Mucosa of descending colon (tissue), 3 donors: ENCODE measurements at regions of chr16 and their contacts with region 1.

Region 1: DNA sequence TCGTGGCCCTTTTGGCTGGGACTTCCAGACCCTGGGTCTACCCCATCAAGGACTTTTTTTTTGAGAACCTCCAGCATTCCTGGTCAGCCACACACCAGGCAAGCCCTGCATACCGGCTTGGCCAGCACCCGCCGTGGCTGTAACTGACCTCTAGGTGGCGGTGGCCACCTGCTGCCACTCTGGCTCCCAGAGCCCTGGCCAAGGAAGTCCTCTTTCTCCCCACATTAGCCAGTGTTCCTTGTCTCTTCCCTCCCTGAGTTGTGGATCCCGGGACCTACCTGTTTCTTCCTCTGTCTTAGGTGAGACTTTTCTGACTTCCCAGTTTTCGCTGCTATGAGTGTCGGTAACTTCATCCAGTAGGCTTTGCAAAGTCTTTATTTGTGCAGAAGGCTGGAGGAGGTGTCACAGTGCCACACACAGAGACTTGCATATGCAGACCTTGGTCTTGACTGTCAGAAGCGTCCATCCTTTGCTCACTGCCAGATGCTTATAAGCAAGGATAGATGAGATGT is 348.3 kb downstream of the CPPED1 start:
- DNase-seq: peak; percentile 61 to 75 (median 73)
- ATAC-seq: peak; percentile 88
- H3K4me3 ChIP-seq: no peak overlapping the region
- H3K4me1 ChIP-seq: no peaks in the 10 kb centered on the region
- CTCF ChIP-seq: peak; percentile 71

Region 2: DNA sequence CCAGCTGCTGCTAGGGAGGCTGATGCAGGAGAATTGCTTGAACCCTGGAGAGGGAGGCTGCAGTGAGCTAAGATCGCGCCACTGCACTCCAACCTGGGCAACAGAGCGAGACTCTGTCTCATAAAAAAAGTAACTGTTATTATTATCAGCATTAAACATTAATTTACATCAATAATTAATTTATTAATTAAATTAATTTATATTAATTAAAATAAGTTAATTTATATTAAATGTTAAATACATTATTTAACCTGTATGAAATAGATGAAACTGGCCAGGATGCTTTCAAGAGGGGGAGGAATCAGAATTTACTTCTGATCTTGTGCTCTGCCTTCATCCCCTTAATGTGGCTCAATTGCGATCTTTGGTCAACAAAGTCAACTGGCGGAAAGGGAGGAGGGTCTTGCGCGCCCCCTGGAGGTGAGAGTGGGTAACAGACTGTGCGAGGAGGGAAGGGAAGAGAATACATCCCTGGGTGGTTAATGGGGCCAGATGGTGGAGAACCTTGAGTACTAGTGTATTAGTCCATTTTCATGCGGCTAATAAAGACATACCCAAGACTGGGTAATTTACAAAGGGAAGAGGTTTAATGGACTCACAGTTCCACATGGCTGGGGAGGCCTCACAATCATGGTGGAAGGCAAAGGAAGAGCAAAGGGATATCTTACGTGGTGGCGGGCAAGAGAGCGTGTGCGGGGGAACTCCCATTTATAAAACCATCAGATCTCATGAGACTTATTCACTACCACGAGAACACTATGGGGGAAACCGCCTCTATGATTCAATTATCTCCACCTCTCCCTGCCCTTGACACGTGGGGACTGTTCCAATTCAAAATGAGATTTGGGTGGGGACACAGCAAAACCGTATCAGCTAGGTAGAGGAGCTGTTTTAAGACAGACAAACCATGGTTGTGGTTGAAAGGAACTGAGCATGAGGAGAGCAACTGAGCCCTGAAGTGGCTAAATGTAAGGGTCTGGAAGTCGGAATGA is 364.1 kb after region 1 on chr16:
- intact Hi-C with region 1: loop called (anchors 10 kb)
- DNase-seq: peak; percentile 70 to 85 (median 73)
- ATAC-seq: peak; percentile 88
- H3K4me3 ChIP-seq: no peak overlapping the region
- H3K4me1 ChIP-seq: no peaks in the 10 kb centered on the region
- CTCF ChIP-seq: peak; percentile 76

Region 3: DNA sequence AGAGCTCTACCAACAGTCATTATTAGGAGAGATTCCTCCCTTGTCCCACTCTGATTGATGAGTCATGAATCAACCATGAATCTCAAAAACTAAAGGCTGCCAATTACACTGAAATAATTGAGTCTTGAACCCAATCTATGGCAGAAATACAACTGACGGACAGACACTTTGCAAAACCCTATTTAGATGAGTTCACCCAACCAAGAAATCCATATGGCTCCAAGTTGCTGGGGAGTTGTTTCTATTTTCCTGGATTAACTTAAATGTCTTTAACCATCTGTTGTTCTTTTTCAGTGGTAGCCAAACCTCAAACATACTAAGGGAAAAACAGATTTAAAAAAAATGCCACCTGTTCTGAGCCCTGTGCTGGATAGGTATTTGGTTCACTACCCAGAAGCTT is 597.1 kb after region 1 on chr16:
- intact Hi-C with region 1: no loop called
- DNase-seq: no peak
- ATAC-seq: no peak
- H3K4me3 ChIP-seq: no peak overlapping the region
- H3K4me1 ChIP-seq: no peaks in the 10 kb centered on the region
- CTCF ChIP-seq: no peak